ENCODE measurements at regions of chr10 and their contacts with region 1.

Region 1: DNA sequence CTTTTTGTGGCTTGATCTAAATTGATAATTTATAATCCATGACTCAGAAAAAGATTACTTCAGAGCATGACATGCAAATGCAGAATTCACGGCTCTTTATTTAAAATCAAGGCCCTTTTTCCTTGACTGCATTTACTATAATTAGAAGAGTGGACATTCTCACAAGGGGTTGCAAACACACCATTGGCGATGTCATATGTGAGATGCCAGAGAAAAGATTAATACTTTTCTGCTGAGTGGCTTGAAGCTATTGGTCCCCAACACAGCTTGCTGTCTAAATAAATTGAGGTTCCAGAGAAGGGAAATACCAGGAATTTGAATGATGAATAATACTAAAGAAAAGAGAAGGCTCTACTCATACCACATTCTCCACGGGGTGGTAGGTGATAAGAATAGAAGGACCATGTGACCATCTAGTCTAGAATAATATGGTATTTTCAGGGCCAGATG is 78.7 kb upstream of the ARID5B start:
- DNase-seq: no peak
- ATAC-seq: no peak
- H3K4me3 ChIP-seq: no peak overlapping the region
- H3K27ac ChIP-seq: no peak overlapping the region
- H3K4me1 ChIP-seq: no peaks in the 10 kb centered on the region
- H3K27me3 ChIP-seq: no peaks in the 10 kb centered on the region
- CTCF ChIP-seq: no peak
- POLR2A ChIP-seq: no peak

Region 2: DNA sequence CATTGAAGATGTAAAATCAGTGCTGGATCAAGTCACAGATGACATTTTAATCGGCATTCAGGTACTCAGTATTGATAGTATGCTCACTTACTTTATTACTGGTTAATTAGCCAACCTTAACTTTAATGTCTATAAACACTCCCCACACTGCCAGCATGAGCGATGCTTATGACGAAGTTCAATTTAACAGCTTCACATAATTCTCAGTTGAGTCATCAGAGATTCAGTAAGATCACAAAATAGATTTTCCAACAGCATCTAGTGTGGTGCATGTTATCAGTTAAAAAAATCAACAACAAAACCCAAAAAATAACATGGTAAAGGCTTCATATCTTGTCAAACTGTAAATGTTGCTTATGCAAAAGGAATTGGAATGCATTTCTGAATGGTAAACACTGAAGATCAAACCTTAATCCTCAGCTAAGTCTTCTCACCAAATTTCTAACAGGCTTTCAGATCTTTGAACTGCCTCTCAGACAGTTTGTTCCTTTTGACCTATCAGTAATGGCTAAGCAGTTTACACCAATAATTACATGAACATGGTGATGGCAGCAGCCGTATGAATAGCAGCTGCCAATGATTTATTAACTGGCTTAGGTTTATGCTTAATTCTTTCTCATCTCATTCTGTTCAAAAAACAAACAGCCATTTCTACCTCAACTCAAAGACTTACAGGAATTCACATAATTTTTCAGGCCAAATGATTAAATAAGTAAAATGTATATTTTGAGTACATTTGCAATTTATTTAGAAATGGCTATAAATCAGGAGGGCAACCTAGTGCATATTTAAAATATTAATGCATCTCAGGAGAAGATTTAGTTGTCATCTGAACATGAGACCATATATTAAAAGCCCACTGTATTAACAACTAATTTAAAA is 61.6 kb before region 1 on chr10:
- intact Hi-C with region 1: loop called (anchors 10 kb)
- DNase-seq: no peak
- ATAC-seq: peak; percentile 51
- H3K4me3 ChIP-seq: no peak overlapping the region
- H3K27ac ChIP-seq: peak overlapping the region in 3 of 4 donors; percentile 17 to 36 (median 18)
- H3K4me1 ChIP-seq: peaks cover 10% of the 10 kb centered on the region
- H3K27me3 ChIP-seq: no peaks in the 10 kb centered on the region
- CTCF ChIP-seq: no peak
- POLR2A ChIP-seq: no peak

Region 3: GRCh38 chr10:62348029-62348428 is 525.2 kb after region 1 on chr10:
- intact Hi-C with region 1: no loop called
- DNase-seq: no peak
- ATAC-seq: no peak
- H3K4me3 ChIP-seq: no peak overlapping the region
- H3K27ac ChIP-seq: no peak overlapping the region
- H3K4me1 ChIP-seq: no peaks in the 10 kb centered on the region
- H3K27me3 ChIP-seq: no peaks in the 10 kb centered on the region
- CTCF ChIP-seq: no peak
- POLR2A ChIP-seq: no peak

Region 4: GRCh38 chr10:62517252-62517651 is 694.4 kb after region 1 on chr10:
- intact Hi-C with region 1: no loop called
- DNase-seq: no peak
- ATAC-seq: no peak
- H3K4me3 ChIP-seq: no peak overlapping the region
- H3K27ac ChIP-seq: no peak overlapping the region
- H3K4me1 ChIP-seq: no peaks in the 10 kb centered on the region
- H3K27me3 ChIP-seq: no peaks in the 10 kb centered on the region
- CTCF ChIP-seq: no peak
- POLR2A ChIP-seq: no peak